Left cardiac atrium (tissue), 4 donors: ENCODE measurements at regions of chr11 and their contacts with region 1.

Region 1: DNA sequence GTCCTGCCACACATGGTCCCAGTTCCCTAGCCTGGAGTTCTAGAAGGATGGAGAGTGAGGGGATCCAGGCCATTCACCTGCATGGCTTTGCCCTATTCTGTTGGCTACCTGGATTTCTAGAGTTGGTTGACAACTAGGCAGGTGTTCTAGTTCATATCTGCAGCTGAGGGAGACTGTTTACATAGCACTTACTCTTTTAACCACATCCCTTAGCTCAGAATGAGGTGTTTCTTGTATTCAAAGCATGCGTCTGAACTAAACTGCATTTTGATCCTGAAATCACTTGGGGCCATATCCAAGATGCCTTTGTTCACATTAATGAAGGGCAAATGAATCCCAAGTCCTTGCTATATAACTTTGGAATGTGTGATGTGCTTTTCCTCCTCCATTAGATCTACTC is 60.9 kb downstream of the SYT13 start:
- DNase-seq: no peak
- ATAC-seq: no peak

Region 2: GRCh38 chr11:45133871-45134270 is 91.4 kb before region 1 on chr11:
- intact Hi-C with region 1: loop called in 1 of 2 experiments (anchors 10 kb)
- DNase-seq: no peak
- ATAC-seq: no peak